ENCODE measurements at regions of chr4 and their contacts with region 1.

Region 1: DNA sequence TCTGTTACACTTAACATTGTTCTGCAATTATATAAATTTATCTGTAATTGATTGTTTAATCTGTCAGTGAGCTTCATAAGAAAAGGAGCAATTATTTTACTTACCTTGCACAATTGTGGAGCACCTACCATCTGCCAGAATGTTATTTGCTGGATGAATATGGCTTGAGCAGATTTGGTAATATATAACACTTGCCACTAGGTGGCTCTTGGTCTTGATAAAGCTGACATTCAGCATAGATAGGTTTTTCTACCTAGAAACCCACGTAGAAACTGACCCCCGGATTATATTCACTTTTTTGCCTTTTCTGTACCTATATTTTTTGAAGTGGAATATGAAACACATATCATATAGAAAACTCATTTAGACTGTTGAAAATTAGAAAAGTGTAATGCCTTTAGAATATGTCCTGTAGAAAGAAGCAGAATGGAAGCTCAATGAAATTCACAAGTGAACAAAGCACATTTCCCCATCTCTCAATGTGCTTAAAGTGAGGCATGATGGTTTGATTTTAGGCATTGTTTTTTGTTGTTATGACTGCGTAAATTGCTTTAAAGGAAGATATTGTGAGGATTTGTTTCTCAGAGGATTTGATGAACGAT is 9.5 kb downstream of the RBPJ start:
- DNase-seq: no peak
- H3K4me3 Mint-ChIP-seq: no peak overlapping the region
- H3K27ac Mint-ChIP-seq: no peak overlapping the region
- H3K4me1 Mint-ChIP-seq: peaks cover 53% of the 10 kb centered on the region
- H3K27me3 Mint-ChIP-seq: no peaks in the 10 kb centered on the region

Region 2: GRCh38 chr4:25953740-25954139 is 376.5 kb before region 1 on chr4:
- CTCF ChIA-PET with region 1: no interaction called
- POLR2A ChIA-PET with region 1: no interaction called
- intact Hi-C with region 1: no loop called
- DNase-seq: no peak
- H3K4me3 Mint-ChIP-seq: no peak overlapping the region
- H3K27ac Mint-ChIP-seq: no peak overlapping the region
- H3K4me1 Mint-ChIP-seq: peaks cover 22% of the 10 kb centered on the region
- H3K27me3 Mint-ChIP-seq: peaks cover 28% of the 10 kb centered on the region

Region 3: GRCh38 chr4:26028793-26029567 is 301.3 kb before region 1 on chr4:
- CTCF ChIA-PET with region 1: interaction called, 29 read pairs
- POLR2A ChIA-PET with region 1: no interaction called
- intact Hi-C with region 1: loop called (anchors 1 kb)
- DNase-seq: peak; percentile 85
- H3K4me3 Mint-ChIP-seq: no peak overlapping the region
- H3K27ac Mint-ChIP-seq: no peak overlapping the region
- H3K4me1 Mint-ChIP-seq: peaks cover 16% of the 10 kb centered on the region
- H3K27me3 Mint-ChIP-seq: peaks cover 2% of the 10 kb centered on the region

Region 4: DNA sequence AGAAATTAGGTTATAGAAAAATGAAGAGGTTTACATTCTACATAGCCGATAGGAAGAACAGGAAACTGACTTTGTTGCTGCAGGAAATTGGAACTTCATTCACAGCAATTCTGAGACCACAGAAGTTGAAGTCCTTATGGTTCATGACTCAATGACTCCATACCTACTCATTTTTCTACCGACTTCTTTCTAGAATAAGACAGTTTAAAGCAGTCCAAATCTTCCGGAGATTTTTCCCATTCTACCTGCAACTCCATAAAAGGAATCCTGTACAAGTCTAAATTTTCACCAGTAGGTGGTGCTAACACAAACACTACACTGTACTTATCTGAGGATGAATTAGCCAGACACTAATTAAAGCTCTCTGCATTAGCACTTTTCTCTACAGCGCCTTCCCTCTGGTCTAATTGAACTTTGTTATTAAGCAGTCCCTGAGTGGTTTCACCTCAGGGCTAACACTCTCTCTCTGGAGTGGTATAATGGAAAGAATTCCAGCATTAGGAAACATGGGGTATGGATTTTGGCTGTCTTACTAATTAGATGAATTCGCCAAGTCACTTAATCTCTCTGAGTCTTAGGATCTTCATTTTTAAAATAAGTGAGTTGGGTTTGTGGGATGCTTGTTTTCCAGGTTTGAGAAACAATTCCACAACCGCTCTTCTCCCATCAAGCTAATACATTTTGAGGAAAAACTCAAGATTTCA is 248.3 kb before region 1 on chr4:
- CTCF ChIA-PET with region 1: interaction called, 13 read pairs
- POLR2A ChIA-PET with region 1: no interaction called
- intact Hi-C with region 1: no loop called
- DNase-seq: no peak
- H3K4me3 Mint-ChIP-seq: peak overlapping the region; percentile 1
- H3K27ac Mint-ChIP-seq: peak overlapping the region; percentile 90
- H3K4me1 Mint-ChIP-seq: peaks cover 88% of the 10 kb centered on the region
- H3K27me3 Mint-ChIP-seq: no peaks in the 10 kb centered on the region

Region 5: GRCh38 chr4:26349496-26349895 is 19.2 kb after region 1 on chr4:
- CTCF ChIA-PET with region 1: interaction called, 26 read pairs
- POLR2A ChIA-PET with region 1: no interaction called
- intact Hi-C with region 1: no loop called
- DNase-seq: no peak
- H3K4me3 Mint-ChIP-seq: no peak overlapping the region
- H3K27ac Mint-ChIP-seq: no peak overlapping the region
- H3K4me1 Mint-ChIP-seq: peaks cover 65% of the 10 kb centered on the region
- H3K27me3 Mint-ChIP-seq: no peaks in the 10 kb centered on the region

Region 6: DNA sequence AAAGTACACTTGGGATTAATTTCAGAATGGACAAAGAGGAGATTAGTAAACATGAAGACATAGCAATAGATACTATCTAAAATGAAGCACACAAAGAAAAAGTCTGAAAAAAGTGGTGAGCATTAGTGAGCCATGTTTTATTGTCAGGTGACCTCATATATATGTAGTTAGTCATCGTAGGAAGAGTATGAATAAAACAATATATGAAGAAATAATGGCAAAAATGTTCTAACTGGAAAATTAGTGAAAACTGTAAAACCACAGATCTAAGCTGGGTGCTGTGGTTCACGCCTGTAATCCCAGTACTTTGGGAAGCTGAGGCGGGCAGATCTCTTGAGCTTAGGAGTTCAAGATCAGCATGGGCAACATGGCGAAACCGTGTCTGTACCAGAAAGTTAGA is 58.4 kb after region 1 on chr4:
- CTCF ChIA-PET with region 1: interaction called, 10 read pairs
- POLR2A ChIA-PET with region 1: interaction called, 6 read pairs
- intact Hi-C with region 1: no loop called
- DNase-seq: no peak
- H3K4me3 Mint-ChIP-seq: no peak overlapping the region
- H3K27ac Mint-ChIP-seq: no peak overlapping the region
- H3K4me1 Mint-ChIP-seq: peaks cover 28% of the 10 kb centered on the region
- H3K27me3 Mint-ChIP-seq: no peaks in the 10 kb centered on the region

Region 7: DNA sequence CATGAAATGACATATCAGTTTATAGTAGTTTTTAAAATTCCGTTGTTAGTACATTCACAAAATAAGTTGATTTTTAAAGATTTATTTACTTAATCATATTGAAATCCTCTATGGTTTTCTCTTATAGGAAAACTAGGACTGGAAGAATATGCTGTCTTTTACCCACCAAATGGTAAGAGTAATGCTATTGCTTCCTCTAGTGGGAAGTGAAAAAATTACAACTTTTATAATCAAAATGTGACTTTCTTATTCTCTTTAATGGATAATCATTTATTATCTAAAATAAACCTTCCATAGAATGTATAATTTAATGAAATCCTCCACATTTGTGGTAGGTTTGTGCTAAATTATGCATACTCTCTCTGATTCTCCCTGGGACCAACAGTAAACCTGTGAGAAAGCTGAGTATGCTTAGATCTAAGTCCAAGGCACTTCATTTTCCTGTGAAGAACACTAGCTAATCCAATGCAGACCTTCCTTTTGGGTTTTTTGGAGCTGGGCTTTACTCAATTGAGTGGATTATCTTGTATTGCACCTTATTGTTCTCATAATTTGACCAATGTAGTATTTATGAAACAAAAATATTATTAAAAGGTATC is 389.8 kb after region 1 on chr4:
- CTCF ChIA-PET with region 1: no interaction called
- POLR2A ChIA-PET with region 1: no interaction called
- intact Hi-C with region 1: no loop called
- DNase-seq: no peak
- H3K4me3 Mint-ChIP-seq: no peak overlapping the region
- H3K27ac Mint-ChIP-seq: no peak overlapping the region
- H3K4me1 Mint-ChIP-seq: no peaks in the 10 kb centered on the region
- H3K27me3 Mint-ChIP-seq: no peaks in the 10 kb centered on the region